Activated naive CD4-positive, alpha-beta T cell treated with anti-CD3 and anti-CD28 coated beads for 36 hours (primary cell): ENCODE measurements at regions of chr13 and their contacts with region 1.

Region 1: DNA sequence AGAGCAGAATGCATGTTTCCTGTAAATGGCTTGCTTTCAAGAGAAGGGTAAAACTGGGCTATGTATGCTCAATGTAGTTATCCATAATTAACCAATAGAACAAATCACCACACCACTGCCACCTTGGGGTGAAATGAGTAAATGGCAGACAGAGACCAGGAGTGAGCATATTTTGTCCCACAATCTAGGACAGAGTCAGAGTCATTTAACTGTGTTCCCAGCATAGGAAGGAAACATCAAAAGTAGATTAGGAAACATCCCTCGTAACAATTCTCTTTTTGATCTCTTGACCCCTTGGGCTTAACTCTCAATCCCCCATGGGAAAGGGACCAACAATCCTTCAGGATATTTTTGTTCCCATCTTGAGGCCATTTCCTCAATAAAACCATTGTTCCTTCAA is 224.8 kb downstream of the NHLRC3 start:
- DNase-seq: peak; percentile 68
- H3K4me3 Mint-ChIP-seq: no peak overlapping the region
- H3K27ac Mint-ChIP-seq: no peak overlapping the region
- H3K4me1 Mint-ChIP-seq: peaks cover 14% of the 10 kb centered on the region
- H3K27me3 Mint-ChIP-seq: peaks cover 6% of the 10 kb centered on the region

Region 2: DNA sequence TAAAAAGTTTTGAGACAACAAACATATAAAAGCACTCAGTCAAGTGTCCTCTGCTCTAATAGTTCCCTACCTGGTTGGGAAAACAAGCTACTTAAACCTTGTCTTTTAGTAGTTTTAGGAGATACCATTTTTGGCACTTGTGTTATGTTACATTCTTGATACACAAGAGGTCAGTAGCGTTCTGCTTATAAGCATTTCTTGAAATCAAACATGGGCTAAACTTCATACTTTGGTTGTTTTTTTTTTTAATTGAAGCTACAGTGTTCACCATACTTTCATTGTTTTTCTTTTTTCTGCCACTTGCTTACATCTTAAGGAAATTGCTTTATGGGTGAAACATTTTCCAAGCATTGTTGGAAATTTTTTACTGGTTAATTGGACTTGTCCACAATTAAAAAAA is 211.9 kb before region 1 on chr13:
- CTCF ChIA-PET with region 1: interaction called, 8 read pairs
- intact Hi-C with region 1: loop called (anchors 1 kb)
- DNase-seq: no peak
- H3K4me3 Mint-ChIP-seq: no peak overlapping the region
- H3K27ac Mint-ChIP-seq: no peak overlapping the region
- H3K4me1 Mint-ChIP-seq: peaks cover 14% of the 10 kb centered on the region
- H3K27me3 Mint-ChIP-seq: no peaks in the 10 kb centered on the region

Region 3: DNA sequence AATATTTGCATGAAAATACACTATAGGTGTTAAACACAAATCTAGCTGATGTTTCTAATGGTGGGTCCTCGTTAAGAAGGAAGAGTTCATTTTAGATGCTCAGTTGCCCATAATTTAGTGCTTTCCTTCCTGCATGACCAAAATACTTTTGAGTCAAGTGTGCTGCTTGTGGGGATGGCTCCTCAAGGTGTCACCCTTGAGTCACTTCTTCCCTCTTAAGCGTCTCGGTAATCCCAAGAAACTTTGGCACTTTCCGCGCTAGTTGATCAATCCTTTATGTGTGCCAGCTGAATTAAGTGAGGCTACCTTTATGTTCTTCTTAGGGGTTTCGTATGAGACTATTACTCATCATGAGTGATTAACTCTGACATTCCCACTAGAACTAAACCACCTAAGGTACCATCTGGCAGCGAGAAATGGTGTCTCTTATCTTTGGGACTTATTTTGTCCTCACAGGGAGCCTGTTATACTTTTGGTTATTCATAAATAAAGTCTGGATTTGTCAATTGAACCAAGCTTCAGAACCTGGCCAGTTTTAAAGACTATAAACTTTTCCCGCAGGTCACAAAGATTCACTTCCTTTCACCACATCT is 118.0 kb before region 1 on chr13:
- CTCF ChIA-PET with region 1: interaction called, 21 read pairs
- intact Hi-C with region 1: loop called (anchors 1 kb)
- DNase-seq: peak; percentile 64
- H3K4me3 Mint-ChIP-seq: no peak overlapping the region
- H3K27ac Mint-ChIP-seq: no peak overlapping the region
- H3K4me1 Mint-ChIP-seq: peaks cover 25% of the 10 kb centered on the region
- H3K27me3 Mint-ChIP-seq: peaks cover 33% of the 10 kb centered on the region

Region 4: GRCh38 chr13:39602614-39603366 is 339.8 kb after region 1 on chr13 and contains the start of gene LHFPL6:
- CTCF ChIA-PET with region 1: no interaction called
- intact Hi-C with region 1: loop called (anchors 2 kb)
- DNase-seq: peak; percentile 85
- H3K4me3 Mint-ChIP-seq: peak within 1 kb of the TSS; percentile 73
- H3K27ac Mint-ChIP-seq: no peak within 1 kb of the TSS
- H3K4me1 Mint-ChIP-seq: peaks cover 11% of the 10 kb centered on the region
- H3K27me3 Mint-ChIP-seq: peaks cover 41% of the 10 kb centered on the region
- total RNA-seq, gene LHFPL6: 1.2 to 1.5 TPM